Activated CD4-positive, alpha-beta memory T cell treated with anti-CD3 and anti-CD28 coated beads for 36 hours (primary cell): ENCODE measurements at regions of chr20 and their contacts with region 1.

Region 1: GRCh38 chr20:45373353-45374100 is 4.6 kb downstream of the TP53TG5 start:
- DNase-seq: peak; percentile 94
- H3K4me3 Mint-ChIP-seq: peak overlapping the region; percentile 79
- H3K27ac Mint-ChIP-seq: peak overlapping the region; percentile 87
- H3K4me1 Mint-ChIP-seq: peaks cover 25% of the 10 kb centered on the region
- H3K27me3 Mint-ChIP-seq: no peaks in the 10 kb centered on the region

Region 2: GRCh38 chr20:45355209-45356084 is 18.1 kb before region 1 on chr20:
- CTCF ChIA-PET with region 1: interaction called, 175 read pairs
- POLR2A ChIA-PET with region 1: interaction called, 8 read pairs
- intact Hi-C with region 1: no loop called
- DNase-seq: peak; percentile 39
- H3K4me3 Mint-ChIP-seq: peak overlapping the region; percentile 54
- H3K27ac Mint-ChIP-seq: peak overlapping the region; percentile 88
- H3K4me1 Mint-ChIP-seq: peaks cover 50% of the 10 kb centered on the region
- H3K27me3 Mint-ChIP-seq: no peaks in the 10 kb centered on the region

Region 3: DNA sequence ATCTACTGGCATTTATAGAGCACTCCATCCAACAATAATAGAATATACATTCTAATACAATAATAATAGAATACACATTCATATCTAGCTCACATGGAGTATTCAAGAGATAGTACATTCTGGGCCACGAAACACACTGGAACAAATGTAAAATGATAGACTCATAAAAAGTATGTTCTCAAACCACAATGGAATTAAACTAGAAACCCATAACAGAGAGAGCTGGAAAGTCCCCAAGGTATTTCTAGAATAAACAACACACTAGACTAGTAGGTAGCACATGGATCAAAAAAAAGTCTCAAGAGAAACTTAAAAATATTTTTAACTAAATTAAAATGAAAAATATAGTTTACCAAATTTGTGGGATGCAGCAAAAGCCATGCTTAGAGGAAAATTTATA is 13.7 kb after region 1 on chr20:
- CTCF ChIA-PET with region 1: interaction called, 18 read pairs
- POLR2A ChIA-PET with region 1: interaction called, 3 read pairs
- intact Hi-C with region 1: no loop called
- DNase-seq: no peak
- H3K4me3 Mint-ChIP-seq: no peak overlapping the region
- H3K27ac Mint-ChIP-seq: no peak overlapping the region
- H3K4me1 Mint-ChIP-seq: peaks cover 24% of the 10 kb centered on the region
- H3K27me3 Mint-ChIP-seq: no peaks in the 10 kb centered on the region

Region 4: DNA sequence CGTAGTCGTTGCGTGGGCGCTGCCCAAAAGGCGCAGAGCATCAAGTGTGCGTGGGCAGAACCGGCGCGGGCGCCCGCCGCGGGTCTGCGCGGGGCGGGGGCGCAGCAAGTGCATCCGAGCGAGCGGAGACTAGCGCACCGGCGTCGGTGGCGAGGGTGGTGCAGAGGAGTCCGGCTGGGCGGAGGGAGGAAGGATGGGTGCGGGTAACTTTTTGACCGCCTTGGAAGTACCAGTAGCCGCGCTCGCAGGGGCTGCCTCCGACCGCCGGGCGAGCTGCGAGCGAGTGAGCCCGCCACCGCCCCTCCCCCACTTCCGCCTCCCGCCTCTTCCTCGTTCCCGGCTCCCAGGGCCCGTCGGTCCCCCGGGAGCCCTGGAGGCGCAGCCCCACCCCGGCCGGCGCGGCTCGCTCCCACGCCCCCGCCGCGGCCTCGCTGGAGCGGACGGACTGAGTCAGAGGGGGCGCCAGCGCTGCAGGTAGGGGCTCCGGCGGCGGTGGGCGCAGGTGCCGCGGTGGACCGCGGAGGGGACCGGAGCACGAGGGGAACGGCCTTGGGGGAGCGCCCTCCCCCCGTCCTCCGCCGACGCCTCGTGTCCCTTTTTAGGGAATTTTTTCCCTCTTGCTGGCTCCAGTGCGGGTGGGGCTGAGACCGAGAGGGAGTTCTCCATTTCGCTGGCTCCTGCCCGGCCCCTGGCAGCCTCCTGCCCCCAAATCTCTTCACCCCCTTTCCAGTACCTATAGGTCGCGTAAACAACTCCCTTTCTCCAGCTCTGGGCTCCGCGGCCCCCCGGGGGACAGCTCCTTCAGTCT is 32.9 kb after region 1 on chr20:
- CTCF ChIA-PET with region 1: interaction called, 15 read pairs
- POLR2A ChIA-PET with region 1: interaction called, 5 read pairs
- intact Hi-C with region 1: no loop called
- DNase-seq: peak; percentile 60
- H3K4me3 Mint-ChIP-seq: peak overlapping the region; percentile 78
- H3K27ac Mint-ChIP-seq: peak overlapping the region; percentile 54
- H3K4me1 Mint-ChIP-seq: peaks cover 18% of the 10 kb centered on the region
- H3K27me3 Mint-ChIP-seq: peaks cover 2% of the 10 kb centered on the region

Region 5: GRCh38 chr20:45427236-45428149 is 54.0 kb after region 1 on chr20:
- CTCF ChIA-PET with region 1: interaction called, 503 read pairs
- POLR2A ChIA-PET with region 1: interaction called, 3 read pairs
- intact Hi-C with region 1: no loop called
- DNase-seq: no peak
- H3K4me3 Mint-ChIP-seq: no peak overlapping the region
- H3K27ac Mint-ChIP-seq: no peak overlapping the region
- H3K4me1 Mint-ChIP-seq: peaks cover 5% of the 10 kb centered on the region
- H3K27me3 Mint-ChIP-seq: no peaks in the 10 kb centered on the region

Region 6: GRCh38 chr20:45444050-45444449 is 70.5 kb after region 1 on chr20:
- CTCF ChIA-PET with region 1: interaction called, 503 read pairs
- POLR2A ChIA-PET with region 1: no interaction called
- intact Hi-C with region 1: no loop called
- DNase-seq: peak; percentile 43
- H3K4me3 Mint-ChIP-seq: no peak overlapping the region
- H3K27ac Mint-ChIP-seq: no peak overlapping the region
- H3K4me1 Mint-ChIP-seq: peaks cover 14% of the 10 kb centered on the region
- H3K27me3 Mint-ChIP-seq: peaks cover 6% of the 10 kb centered on the region

Region 7: GRCh38 chr20:45552456-45552855 is 178.9 kb after region 1 on chr20:
- CTCF ChIA-PET with region 1: no interaction called
- POLR2A ChIA-PET with region 1: no interaction called
- intact Hi-C with region 1: no loop called
- DNase-seq: no peak
- H3K4me3 Mint-ChIP-seq: no peak overlapping the region
- H3K27ac Mint-ChIP-seq: no peak overlapping the region
- H3K4me1 Mint-ChIP-seq: no peaks in the 10 kb centered on the region
- H3K27me3 Mint-ChIP-seq: peaks cover 22% of the 10 kb centered on the region